Breast epithelium (tissue), 4 donors: ENCODE measurements at regions of chr22 and their contacts with region 1.

Region 1: GRCh38 chr22:37316875-37317371 is 34.6 kb downstream of the CYTH4 start:
- DNase-seq: peak; percentile 62 to 69
- H3K4me3 ChIP-seq: no peak overlapping the region
- H3K27ac ChIP-seq: no peak overlapping the region
- H3K4me1 ChIP-seq: no peaks in the 10 kb centered on the region
- H3K27me3 ChIP-seq: no peaks in the 10 kb centered on the region
- CTCF ChIP-seq: peak; percentile 44 to 88 (median 84)
- POLR2A ChIP-seq: no peak

Region 2: GRCh38 chr22:36725356-36726006 is 591.4 kb before region 1 on chr22:
- intact Hi-C with region 1: loop called (anchors 5 kb)
- DNase-seq: peak in 1 of 2 donors; percentile 41
- H3K4me3 ChIP-seq: no peak overlapping the region
- H3K27ac ChIP-seq: no peak overlapping the region
- H3K4me1 ChIP-seq: no peaks in the 10 kb centered on the region
- H3K27me3 ChIP-seq: peaks cover 0 to 48% of the 10 kb centered on the region in 2 donors
- CTCF ChIP-seq: no peak
- POLR2A ChIP-seq: no peak